Naive thymus-derived CD4-positive, alpha-beta T cell (primary cell): ENCODE measurements at regions of chr17 and their contacts with region 1.

Region 1: DNA sequence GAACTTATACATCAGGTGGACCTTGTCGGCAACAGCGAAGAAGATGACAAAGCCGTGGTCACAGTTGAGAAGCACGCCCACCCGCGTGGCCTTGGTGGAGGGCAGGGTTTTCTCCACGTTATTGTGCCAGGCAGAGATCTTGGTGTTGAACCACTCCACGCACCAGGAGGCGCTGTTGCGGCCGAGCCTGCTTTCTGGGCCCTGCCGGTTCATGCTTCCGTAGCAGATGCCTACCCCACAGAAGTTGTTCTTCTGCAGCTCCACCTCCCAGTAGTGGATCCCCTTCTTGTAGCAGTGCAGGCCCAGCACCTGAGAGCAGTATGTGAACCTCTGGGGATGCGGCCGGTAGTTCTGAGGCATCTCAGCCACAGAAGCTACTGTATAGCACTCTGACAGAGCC is 22.1 kb downstream of the TRIM25 start:
- DNase-seq: peak; percentile 16 to 61 (median 47)
- ATAC-seq: peak; percentile 74
- H3K4me3 ChIP-seq: no peak overlapping the region
- H3K4me3 Mint-ChIP-seq: no peak overlapping the region
- H3K27ac ChIP-seq: no peak overlapping the region
- H3K27ac Mint-ChIP-seq: no peak overlapping the region
- H3K4me1 ChIP-seq: no peaks in the 10 kb centered on the region
- H3K4me1 Mint-ChIP-seq: peaks cover 0 to 12% (median 0%) of the 10 kb centered on the region in 7 donors
- H3K27me3 ChIP-seq: no peaks in the 10 kb centered on the region
- H3K27me3 Mint-ChIP-seq: no peaks in the 10 kb centered on the region

Region 2: GRCh38 chr17:56570199-56570598 is 321.6 kb before region 1 on chr17:
- CTCF ChIA-PET with region 1: no interaction called
- POLR2A ChIA-PET with region 1: no interaction called
- intact Hi-C with region 1: no loop called
- DNase-seq: no peak
- ATAC-seq: no peak
- H3K4me3 ChIP-seq: no peak overlapping the region
- H3K4me3 Mint-ChIP-seq: no peak overlapping the region
- H3K27ac ChIP-seq: no peak overlapping the region
- H3K27ac Mint-ChIP-seq: no peak overlapping the region
- H3K4me1 ChIP-seq: no peaks in the 10 kb centered on the region
- H3K4me1 Mint-ChIP-seq: no peaks in the 10 kb centered on the region
- H3K27me3 ChIP-seq: peaks cover 0 to 3% of the 10 kb centered on the region in 2 donors
- H3K27me3 Mint-ChIP-seq: peaks cover 0 to 13% (median 6%) of the 10 kb centered on the region in 5 donors

Region 3: GRCh38 chr17:56939901-56940343 is 48.1 kb after region 1 on chr17:
- CTCF ChIA-PET with region 1: interaction called, 10 read pairs
- POLR2A ChIA-PET with region 1: no interaction called
- intact Hi-C with region 1: loop called (anchors 1 to 2 kb)
- DNase-seq: peak in 7 of 9 donors; percentile 27 to 64 (median 52)
- ATAC-seq: peak; percentile 80
- H3K4me3 ChIP-seq: no peak overlapping the region
- H3K4me3 Mint-ChIP-seq: no peak overlapping the region
- H3K27ac ChIP-seq: no peak overlapping the region
- H3K27ac Mint-ChIP-seq: peak overlapping the region in 5 of 9 donors; percentile 4 to 85 (median 65)
- H3K4me1 ChIP-seq: no peaks in the 10 kb centered on the region
- H3K4me1 Mint-ChIP-seq: peaks cover 0 to 19% (median 0%) of the 10 kb centered on the region in 7 donors
- H3K27me3 ChIP-seq: no peaks in the 10 kb centered on the region
- H3K27me3 Mint-ChIP-seq: no peaks in the 10 kb centered on the region

Region 4: GRCh38 chr17:56960596-56961538 is 69.1 kb after region 1 on chr17 and contains the start of gene COIL:
- CTCF ChIA-PET with region 1: no interaction called
- POLR2A ChIA-PET with region 1: no interaction called
- intact Hi-C with region 1: loop called in 1 of 2 experiments (anchors 1 kb)
- DNase-seq: peak; percentile 90 to 96 (median 92)
- ATAC-seq: peak; percentile 100
- H3K4me3 ChIP-seq: peak within 1 kb of the TSS; percentile 80
- H3K4me3 Mint-ChIP-seq: peak within 1 kb of the TSS; percentile 80 to 93 (median 86)
- H3K27ac ChIP-seq: peak within 1 kb of the TSS; percentile 97
- H3K27ac Mint-ChIP-seq: peak within 1 kb of the TSS; percentile 78 to 95 (median 91)
- H3K4me1 ChIP-seq: peaks cover 6 to 11% of the 10 kb centered on the region in 2 donors
- H3K4me1 Mint-ChIP-seq: peaks cover 14 to 34% (median 28%) of the 10 kb centered on the region in 7 donors
- H3K27me3 ChIP-seq: no peaks in the 10 kb centered on the region
- H3K27me3 Mint-ChIP-seq: peaks cover 0 to 3% (median 0%) of the 10 kb centered on the region in 5 donors
- total RNA-seq, gene COIL: 13.1 to 22.7 (median 19.0) TPM